Motor neuron (in vitro differentiated cells): ENCODE measurements at regions of chr1 and their contacts with region 1.

Region 1: GRCh38 chr1:214029796-214030195 is 42.0 kb downstream of the PROX1 start:
- ATAC-seq: peak in 5 of 8 experiments; percentile 55 to 76 (median 68)
- H3K4me3 ChIP-seq: no peak overlapping the region
- H3K27ac ChIP-seq: peak overlapping the region; percentile 43 to 58
- H3K4me1 ChIP-seq: peaks cover 48 to 54% of the 10 kb centered on the region in 2 donors

Region 2: GRCh38 chr1:214086945-214087344 is 57.1 kb after region 1 on chr1:
- in situ Hi-C with region 1: loop called in 1 of 9 experiments (anchors 10 kb)
- ATAC-seq: no peak
- H3K4me3 ChIP-seq: no peak overlapping the region
- H3K27ac ChIP-seq: no peak overlapping the region
- H3K4me1 ChIP-seq: no peaks in the 10 kb centered on the region

Region 3: GRCh38 chr1:214615871-214616270 is 586.1 kb after region 1 on chr1:
- in situ Hi-C with region 1: no loop called
- ATAC-seq: no peak
- H3K4me3 ChIP-seq: no peak overlapping the region
- H3K27ac ChIP-seq: no peak overlapping the region
- H3K4me1 ChIP-seq: no peaks in the 10 kb centered on the region